WTC11 (cell line): ENCODE measurements at regions of chr21 and their contacts with region 1.

Region 1: GRCh38 chr21:15534450-15534886 is 195.3 kb upstream of the USP25 start:
- DNase-seq: no peak
- ATAC-seq: peak; percentile 47; the same call in 1 of the 2 replicates
- H3K4me3 Mint-ChIP-seq: no peak overlapping the region
- H3K27ac Mint-ChIP-seq: no peak overlapping the region
- H3K4me1 Mint-ChIP-seq: no peaks in the 10 kb centered on the region
- H3K27me3 Mint-ChIP-seq: no peaks in the 10 kb centered on the region
- CTCF ChIP-seq: no peak

Region 2: DNA sequence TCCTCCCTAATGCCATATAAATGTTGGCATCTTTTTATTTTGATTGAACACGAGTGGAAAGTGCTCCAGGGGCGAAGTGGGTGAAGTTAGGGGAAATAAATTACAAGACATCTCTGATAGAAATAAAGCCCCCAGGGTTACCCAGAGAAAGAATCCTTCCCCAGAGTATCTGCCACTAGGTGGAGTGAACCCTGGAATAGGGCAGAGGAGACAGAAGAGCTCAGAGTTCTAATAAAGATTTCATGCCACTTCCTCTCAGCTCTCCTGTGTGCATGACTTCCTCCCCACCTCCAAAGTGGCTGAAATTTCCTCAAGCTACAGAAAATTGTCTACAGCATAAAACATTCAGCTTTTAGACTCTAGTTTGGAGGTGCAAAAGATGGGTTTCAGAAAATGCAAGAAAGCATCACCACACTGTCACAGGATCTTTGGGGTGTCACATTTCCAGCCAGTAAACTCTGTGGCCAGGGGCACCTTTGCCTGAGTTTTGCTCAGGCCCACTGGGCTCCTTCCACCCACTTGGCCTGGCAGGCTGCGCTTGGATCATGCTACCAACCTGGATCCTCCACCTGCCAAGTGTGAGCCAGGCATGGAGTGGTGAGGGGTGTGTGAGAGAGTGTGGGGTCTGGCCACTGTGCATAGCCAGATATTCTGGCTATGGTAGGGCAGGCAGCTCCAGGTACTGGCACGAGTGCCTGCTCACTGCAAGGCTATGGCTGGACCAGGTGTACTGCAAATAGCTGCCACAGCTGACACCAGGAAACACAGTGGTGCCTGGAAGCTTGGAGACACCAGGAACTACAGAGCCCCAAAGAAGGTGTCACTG is 13.4 kb before region 1 on chr21:
- CTCF ChIA-PET with region 1: interaction called, 17 read pairs
- POLR2A ChIA-PET with region 1: no interaction called
- DNase-seq: no peak
- ATAC-seq: peak; percentile 71
- H3K4me3 Mint-ChIP-seq: no peak overlapping the region
- H3K27ac Mint-ChIP-seq: no peak overlapping the region
- H3K4me1 Mint-ChIP-seq: no peaks in the 10 kb centered on the region
- H3K27me3 Mint-ChIP-seq: no peaks in the 10 kb centered on the region
- CTCF ChIP-seq: no peak

Region 3: GRCh38 chr21:15564907-15565306 is 30.4 kb after region 1 on chr21:
- CTCF ChIA-PET with region 1: no interaction called
- POLR2A ChIA-PET with region 1: no interaction called
- DNase-seq: no peak
- ATAC-seq: no peak
- H3K4me3 Mint-ChIP-seq: no peak overlapping the region
- H3K27ac Mint-ChIP-seq: no peak overlapping the region
- H3K4me1 Mint-ChIP-seq: peaks cover 32% of the 10 kb centered on the region
- H3K27me3 Mint-ChIP-seq: peaks cover 33% of the 10 kb centered on the region
- CTCF ChIP-seq: no peak